Naive thymus-derived CD8-positive, alpha-beta T cell (primary cell): ENCODE measurements at regions of chr7 and their contacts with region 1.

Region 1: DNA sequence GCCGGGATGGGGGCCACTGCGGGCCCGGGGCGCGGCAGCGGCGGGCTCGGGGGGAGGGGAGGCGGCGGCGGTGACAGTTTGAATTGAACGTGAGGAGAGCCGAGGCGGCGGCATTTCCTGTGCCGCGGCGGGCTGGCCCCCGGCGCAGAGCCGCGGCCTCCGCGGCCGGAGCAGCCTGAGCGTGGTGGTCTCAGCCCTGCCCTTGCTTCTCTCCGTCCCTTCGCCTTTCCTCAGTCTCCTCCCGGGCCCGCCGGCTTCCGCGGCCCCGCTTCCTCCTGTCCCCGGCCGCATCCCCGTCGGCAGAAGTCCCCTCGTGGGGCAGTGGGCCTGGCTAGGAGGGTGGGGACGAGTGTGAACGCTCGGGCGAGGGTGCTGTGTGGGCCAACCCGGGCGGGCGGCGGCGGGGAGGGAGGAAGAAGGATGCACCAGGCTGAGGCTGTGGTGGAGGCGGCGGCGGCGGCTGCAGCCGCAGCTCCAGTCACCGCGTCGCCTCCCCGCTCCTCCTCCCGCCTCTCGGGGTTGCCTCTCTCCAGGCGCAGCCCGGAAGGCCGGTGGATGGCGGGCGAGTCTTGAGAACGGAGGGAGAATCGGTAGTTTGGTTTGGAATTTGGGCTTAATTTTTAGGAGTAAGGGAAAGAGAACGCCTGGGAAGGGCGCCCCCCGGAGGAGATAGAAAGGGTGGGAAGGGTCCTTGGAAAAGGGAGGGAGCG is 690 bp downstream of the SEPTIN7 start:
- DNase-seq: peak; percentile 65 to 87 (median 76)
- ATAC-seq: peak; percentile 45 to 52
- H3K4me3 Mint-ChIP-seq: peak overlapping the region; percentile 91 to 97 (median 94)
- H3K27ac Mint-ChIP-seq: peak overlapping the region; percentile 94 to 100 (median 99)
- H3K4me1 Mint-ChIP-seq: peaks cover 35 to 57% (median 54%) of the 10 kb centered on the region in 4 donors
- H3K27me3 Mint-ChIP-seq: no peaks in the 10 kb centered on the region

Region 2: DNA sequence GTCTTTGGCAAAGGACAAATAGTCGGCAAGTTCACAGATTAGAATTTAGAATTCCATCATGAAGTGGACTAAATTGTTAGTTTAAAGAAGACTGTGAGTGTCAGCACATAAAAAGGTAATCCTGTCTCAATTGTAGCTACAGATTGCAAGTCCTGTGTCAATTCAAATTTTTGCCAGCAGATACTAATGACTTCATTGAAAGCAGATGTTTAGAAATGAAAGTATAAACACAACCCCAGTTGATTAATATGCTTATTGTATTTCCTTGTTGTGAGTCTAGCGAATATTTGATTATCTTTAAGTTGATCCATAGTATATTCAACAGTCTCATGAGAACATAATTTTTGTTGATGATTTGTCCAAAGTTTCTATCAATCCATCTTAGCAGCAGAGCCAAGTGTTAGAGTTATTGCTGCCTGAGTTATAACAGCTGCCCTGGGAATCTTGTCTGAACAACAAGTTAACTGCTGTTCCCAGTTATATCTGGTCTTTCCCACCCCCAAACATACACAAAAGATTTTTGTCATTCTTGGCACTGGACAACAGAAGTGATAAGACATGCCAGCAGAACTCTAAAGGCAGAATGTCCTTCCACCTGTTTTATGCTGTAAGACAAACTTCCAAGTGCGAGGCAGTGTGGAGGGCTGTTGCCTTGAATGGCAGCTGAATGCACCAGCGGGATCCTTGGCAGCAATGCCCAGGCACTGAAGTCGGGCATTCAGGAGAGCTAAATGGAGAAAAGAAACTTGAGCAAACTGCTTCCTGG is 85.3 kb before region 1 on chr7:
- POLR2A ChIA-PET with region 1: interaction called, 17 read pairs
- DNase-seq: no peak
- ATAC-seq: no peak
- H3K4me3 Mint-ChIP-seq: no peak overlapping the region
- H3K27ac Mint-ChIP-seq: peak overlapping the region in 3 of 10 donors; percentile 29 to 56 (median 51)
- H3K4me1 Mint-ChIP-seq: peaks cover 6 to 15% (median 8%) of the 10 kb centered on the region in 4 donors
- H3K27me3 Mint-ChIP-seq: no peaks in the 10 kb centered on the region

Region 3: GRCh38 chr7:35729061-35729783 is 72.3 kb before region 1 on chr7:
- POLR2A ChIA-PET with region 1: interaction called, 18 read pairs
- DNase-seq: peak in 2 of 10 donors; percentile 51 to 53
- ATAC-seq: peak in 1 of 2 donors; percentile 43
- H3K4me3 Mint-ChIP-seq: peak overlapping the region in 5 of 10 donors; percentile 9 to 62 (median 14)
- H3K27ac Mint-ChIP-seq: peak overlapping the region in 8 of 10 donors; percentile 47 to 94 (median 76)
- H3K4me1 Mint-ChIP-seq: peaks cover 26 to 68% (median 60%) of the 10 kb centered on the region in 4 donors
- H3K27me3 Mint-ChIP-seq: no peaks in the 10 kb centered on the region

Region 4: DNA sequence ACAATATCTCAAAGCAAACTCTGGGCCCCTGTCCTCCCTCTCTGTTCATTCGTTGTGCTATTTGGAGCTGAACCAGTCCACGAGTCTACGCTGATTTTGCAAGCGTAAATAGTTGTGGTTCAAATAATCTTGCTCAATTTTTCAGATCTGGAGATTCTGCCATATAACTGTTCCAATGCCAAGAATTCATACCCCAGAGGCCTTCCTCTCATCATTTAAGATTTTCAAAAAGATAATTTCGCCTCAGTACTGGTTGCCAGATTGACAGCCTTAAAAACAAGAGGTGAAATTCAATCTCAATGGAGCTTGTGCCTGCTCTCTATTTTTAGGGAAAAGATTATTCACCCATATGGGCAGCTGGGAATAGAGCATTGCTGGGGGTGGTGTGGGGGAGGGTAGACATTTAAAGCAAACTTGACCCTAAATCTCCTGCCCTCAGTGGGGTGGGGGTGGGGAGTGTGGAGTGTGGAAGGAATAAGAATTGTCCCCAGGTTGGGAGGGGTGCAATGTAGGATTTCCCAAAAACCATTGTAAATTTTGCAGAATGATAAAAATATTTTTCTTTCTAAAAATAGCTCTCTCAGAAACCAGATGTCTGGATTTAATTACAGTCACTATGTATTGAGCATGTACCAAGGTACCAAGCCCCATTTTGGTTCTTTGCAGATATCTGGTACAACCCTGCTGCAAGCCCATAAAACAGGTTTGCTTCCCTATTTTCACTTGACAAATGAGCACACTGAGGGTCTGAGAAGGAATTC is 246.8 kb after region 1 on chr7:
- POLR2A ChIA-PET with region 1: no interaction called
- DNase-seq: no peak
- ATAC-seq: no peak
- H3K4me3 Mint-ChIP-seq: no peak overlapping the region
- H3K27ac Mint-ChIP-seq: no peak overlapping the region
- H3K4me1 Mint-ChIP-seq: no peaks in the 10 kb centered on the region
- H3K27me3 Mint-ChIP-seq: peaks cover 0 to 2% (median 0%) of the 10 kb centered on the region in 5 donors